ENCODE measurements at regions of chr12 and their contacts with region 1.

Region 1: GRCh38 chr12:57865090-57865751 is 18.7 kb upstream of the CTDSP2 start:
- DNase-seq: peak; percentile 77
- ATAC-seq: peak; percentile 87
- H3K4me3 ChIP-seq: peak overlapping the region; percentile 83
- H3K27ac ChIP-seq: peak overlapping the region; percentile 80
- H3K4me1 ChIP-seq: peaks cover 26% of the 10 kb centered on the region
- H3K27me3 ChIP-seq: no peaks in the 10 kb centered on the region
- CTCF ChIP-seq: no peak

Region 2: GRCh38 chr12:57846577-57847319 is 18.5 kb before region 1 on chr12 and contains the start of gene CTDSP2:
- CTCF ChIA-PET with region 1: no interaction called
- POLR2A ChIA-PET with region 1: interaction called, 3 read pairs
- intact Hi-C with region 1: loop called (anchors 2 kb)
- DNase-seq: peak; percentile 97
- ATAC-seq: peak; percentile 71
- H3K4me3 ChIP-seq: peak within 1 kb of the TSS; percentile 99
- H3K27ac ChIP-seq: peak within 1 kb of the TSS; percentile 56
- H3K4me1 ChIP-seq: peaks cover 6% of the 10 kb centered on the region; the same call in 1 of the 2 replicates
- H3K27me3 ChIP-seq: no peaks in the 10 kb centered on the region
- CTCF ChIP-seq: no peak
- total RNA-seq, gene CTDSP2: 37.4 and 39.4 TPM in 2 replicates

Region 3: DNA sequence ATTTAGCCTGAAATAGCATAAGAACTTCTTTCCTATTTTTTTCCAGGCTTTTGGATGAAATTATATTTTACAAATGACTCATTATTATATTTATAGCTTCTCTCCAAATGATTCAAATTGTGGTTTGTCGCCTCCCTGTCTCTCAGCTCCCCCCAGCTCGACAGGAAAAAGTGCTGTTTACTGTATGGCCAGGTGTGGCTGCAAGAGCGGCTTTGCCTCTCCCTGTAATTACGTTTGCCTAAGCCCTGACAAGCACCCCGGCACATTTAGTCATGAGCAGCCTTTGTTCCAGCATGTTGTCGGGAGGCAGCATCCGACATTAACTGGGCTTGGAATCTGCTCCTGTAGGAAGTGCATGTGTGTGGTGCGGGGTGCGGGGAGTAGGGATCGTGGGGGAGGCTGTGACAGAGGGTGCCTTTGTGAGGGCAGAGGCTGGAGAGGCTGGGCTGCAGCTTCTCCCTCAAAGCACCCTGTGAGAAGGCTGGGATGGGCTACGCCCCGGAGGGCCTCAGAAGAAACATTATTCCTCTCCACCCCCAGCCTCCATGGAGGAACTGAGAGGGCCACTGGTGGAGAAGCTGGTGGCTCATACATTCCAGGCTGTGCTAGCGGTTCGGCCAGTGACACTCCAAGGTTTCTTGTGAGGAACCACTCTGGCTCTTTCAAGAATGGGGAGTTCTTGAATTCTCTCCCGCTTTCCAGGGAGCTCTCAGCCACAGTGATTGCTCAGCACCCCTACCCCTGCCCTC is 23.4 kb after region 1 on chr12:
- CTCF ChIA-PET with region 1: interaction called, 3 read pairs
- POLR2A ChIA-PET with region 1: interaction called, 3 read pairs
- intact Hi-C with region 1: loop called (anchors 2 kb)
- DNase-seq: peak; percentile 82
- ATAC-seq: peak; percentile 90
- H3K4me3 ChIP-seq: peak overlapping the region; percentile 56
- H3K27ac ChIP-seq: peak overlapping the region; percentile 74
- H3K4me1 ChIP-seq: peaks cover 38% of the 10 kb centered on the region
- H3K27me3 ChIP-seq: no peaks in the 10 kb centered on the region
- CTCF ChIP-seq: no peak

Region 4: DNA sequence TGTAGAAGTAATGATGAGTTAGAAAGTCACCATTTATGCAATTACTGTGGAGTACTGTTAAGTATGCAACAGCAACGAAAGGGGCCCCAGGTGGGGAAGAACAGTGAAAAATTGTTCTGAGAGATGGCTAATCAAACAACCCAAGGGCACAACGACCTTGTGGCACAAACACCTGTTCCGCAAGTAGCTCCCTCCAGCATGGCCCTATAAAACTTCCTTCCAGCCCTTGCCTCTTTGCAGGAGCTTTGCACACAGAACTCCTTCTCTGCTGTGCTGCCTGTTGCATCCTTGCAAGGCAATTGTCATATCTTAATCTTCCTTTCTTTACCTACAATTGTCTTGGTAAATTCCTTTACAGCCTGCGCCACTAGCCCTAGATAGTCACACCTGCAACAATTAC is 52.9 kb after region 1 on chr12:
- CTCF ChIA-PET with region 1: no interaction called
- POLR2A ChIA-PET with region 1: no interaction called
- intact Hi-C with region 1: no loop called
- DNase-seq: no peak
- ATAC-seq: no peak
- H3K4me3 ChIP-seq: no peak overlapping the region
- H3K27ac ChIP-seq: no peak overlapping the region
- H3K4me1 ChIP-seq: no peaks in the 10 kb centered on the region
- H3K27me3 ChIP-seq: no peaks in the 10 kb centered on the region
- CTCF ChIP-seq: no peak